Activated T-helper 1 cell treated with anti-CD3 and anti-CD28 coated beads, Interleukin-12 subunit alpha, Interleukin-12 subunit beta, Interleukin-2, Interleukin-4 antibody, amounts not matched to agents 30 ng/mL and 10 ng/mL and 1 ng/mL, durations not matched to agents 14 hours and 24 hours and 36 hours (primary cell): ENCODE measurements at regions of chr19 and their contacts with region 1.

Region 1: DNA sequence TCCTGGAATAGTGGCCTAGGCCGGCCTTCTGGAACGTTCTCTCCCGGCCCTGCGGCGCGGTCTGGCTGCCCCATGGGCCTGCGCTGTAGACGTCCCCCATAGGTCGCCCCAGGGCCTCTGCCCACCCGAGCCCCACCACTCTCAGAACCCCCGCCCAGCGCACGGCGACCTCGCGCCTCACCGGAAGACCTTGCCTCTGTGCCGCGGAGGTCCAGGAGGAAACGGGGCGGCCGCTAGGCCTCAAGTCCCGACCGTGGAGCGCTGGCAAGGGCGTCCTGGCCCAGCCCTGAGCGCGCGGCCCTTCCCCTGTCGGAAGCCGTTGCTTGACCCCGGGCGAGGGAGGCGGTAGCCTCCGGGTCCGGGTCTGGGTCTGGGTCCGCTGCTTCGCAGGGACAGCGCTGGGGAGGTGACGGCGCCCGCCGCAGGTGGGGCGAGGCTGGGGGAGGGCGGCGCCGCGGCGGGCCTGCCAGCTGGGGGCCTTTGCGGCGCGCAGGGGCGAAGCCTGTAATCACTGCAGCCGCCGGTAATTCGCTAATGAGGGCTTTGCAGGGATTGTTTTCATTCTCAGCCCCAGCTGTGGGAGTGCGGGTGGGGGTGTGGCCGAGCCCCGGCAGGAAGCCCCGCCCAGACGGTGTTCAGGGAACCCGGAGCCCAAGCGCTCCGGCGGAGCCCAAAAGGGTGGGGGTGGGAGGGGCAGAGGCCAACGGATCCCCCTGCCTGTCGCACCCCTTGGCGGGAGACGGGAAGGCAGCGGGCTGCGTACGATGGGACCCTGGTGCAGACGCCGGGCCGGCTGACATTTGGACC is 8.6 kb downstream of the C19orf25 start:
- DNase-seq: peak; percentile 64
- H3K4me3 Mint-ChIP-seq: peak overlapping the region; percentile 75
- H3K27ac Mint-ChIP-seq: peak overlapping the region; percentile 65
- H3K4me1 Mint-ChIP-seq: no peaks in the 10 kb centered on the region
- H3K27me3 Mint-ChIP-seq: peaks cover 12% of the 10 kb centered on the region

Region 2: GRCh38 chr19:1429750-1430149 is 40.7 kb before region 1 on chr19:
- intact Hi-C with region 1: no loop called
- DNase-seq: no peak
- H3K4me3 Mint-ChIP-seq: no peak overlapping the region
- H3K27ac Mint-ChIP-seq: no peak overlapping the region
- H3K4me1 Mint-ChIP-seq: no peaks in the 10 kb centered on the region
- H3K27me3 Mint-ChIP-seq: no peaks in the 10 kb centered on the region

Region 3: GRCh38 chr19:1455336-1456120 is 14.9 kb before region 1 on chr19:
- intact Hi-C with region 1: loop called (anchors 2 kb)
- DNase-seq: peak; percentile 49
- H3K4me3 Mint-ChIP-seq: no peak overlapping the region
- H3K27ac Mint-ChIP-seq: peak overlapping the region; percentile 2
- H3K4me1 Mint-ChIP-seq: peaks cover 5% of the 10 kb centered on the region
- H3K27me3 Mint-ChIP-seq: peaks cover 44% of the 10 kb centered on the region